PC-9 (cell line): ENCODE measurements at regions of chr19 and their contacts with region 1.

Region 1: DNA sequence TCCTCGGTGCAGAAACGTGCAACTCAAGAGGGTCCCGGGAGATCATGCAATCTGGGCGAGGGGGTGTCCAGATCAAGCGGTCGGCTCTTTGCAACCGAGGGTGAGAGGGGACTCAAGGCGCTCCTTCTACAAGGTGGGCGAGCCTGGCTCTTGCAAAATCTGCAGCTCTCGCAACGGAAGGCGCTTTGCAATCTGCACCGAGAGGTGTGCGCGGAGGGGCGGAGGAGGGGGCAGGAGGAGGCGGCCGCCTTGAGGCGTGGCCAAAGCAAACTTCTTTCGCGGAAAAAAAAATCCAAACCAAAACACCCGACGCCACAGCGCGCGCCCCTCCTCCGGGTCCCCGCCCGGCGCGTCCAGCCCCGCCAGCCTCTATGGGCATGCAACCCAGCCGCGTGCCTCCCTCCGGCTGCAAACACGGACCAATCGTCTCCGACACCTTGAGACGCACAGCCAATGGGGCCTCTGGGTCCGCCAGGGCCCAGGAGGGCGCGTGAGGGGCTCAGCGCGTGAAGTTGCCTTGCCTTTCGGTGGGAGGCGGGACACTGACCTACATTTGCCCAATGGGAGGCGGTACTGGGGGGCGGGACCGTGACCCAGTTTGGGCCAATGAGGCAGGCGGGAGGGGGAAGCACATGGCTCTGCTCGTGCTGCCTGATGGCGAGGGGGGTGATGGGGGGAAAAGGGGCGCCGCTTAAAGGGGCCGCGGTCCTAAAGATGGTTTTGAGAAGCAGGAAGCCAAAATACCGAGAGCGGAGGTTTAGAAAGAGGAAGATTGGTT is at the start of gene DBP:
- DNase-seq: peak; percentile 100
- H3K4me3 ChIP-seq: peak within 1 kb of the TSS; percentile 74
- H3K27ac ChIP-seq: peak within 1 kb of the TSS; percentile 84
- H3K4me1 ChIP-seq: peaks cover 31% of the 10 kb centered on the region
- H3K27me3 ChIP-seq: no peaks in the 10 kb centered on the region
- CTCF ChIP-seq: no peak
- total RNA-seq, gene DBP: 48.2 and 48.6 TPM in 2 replicates

Region 2: GRCh38 chr19:48501496-48502350 is 135.6 kb before region 1 on chr19:
- CTCF ChIA-PET with region 1: no interaction called
- POLR2A ChIA-PET with region 1: no interaction called
- intact Hi-C with region 1: loop called (anchors 5 kb)
- DNase-seq: peak; percentile 96 to 99
- H3K4me3 ChIP-seq: peak overlapping the region; percentile 95
- H3K27ac ChIP-seq: peak overlapping the region; percentile 65
- H3K4me1 ChIP-seq: peaks cover 16% of the 10 kb centered on the region; the same call in 1 of the 2 replicates
- H3K27me3 ChIP-seq: no peaks in the 10 kb centered on the region
- CTCF ChIP-seq: no peak

Region 3: DNA sequence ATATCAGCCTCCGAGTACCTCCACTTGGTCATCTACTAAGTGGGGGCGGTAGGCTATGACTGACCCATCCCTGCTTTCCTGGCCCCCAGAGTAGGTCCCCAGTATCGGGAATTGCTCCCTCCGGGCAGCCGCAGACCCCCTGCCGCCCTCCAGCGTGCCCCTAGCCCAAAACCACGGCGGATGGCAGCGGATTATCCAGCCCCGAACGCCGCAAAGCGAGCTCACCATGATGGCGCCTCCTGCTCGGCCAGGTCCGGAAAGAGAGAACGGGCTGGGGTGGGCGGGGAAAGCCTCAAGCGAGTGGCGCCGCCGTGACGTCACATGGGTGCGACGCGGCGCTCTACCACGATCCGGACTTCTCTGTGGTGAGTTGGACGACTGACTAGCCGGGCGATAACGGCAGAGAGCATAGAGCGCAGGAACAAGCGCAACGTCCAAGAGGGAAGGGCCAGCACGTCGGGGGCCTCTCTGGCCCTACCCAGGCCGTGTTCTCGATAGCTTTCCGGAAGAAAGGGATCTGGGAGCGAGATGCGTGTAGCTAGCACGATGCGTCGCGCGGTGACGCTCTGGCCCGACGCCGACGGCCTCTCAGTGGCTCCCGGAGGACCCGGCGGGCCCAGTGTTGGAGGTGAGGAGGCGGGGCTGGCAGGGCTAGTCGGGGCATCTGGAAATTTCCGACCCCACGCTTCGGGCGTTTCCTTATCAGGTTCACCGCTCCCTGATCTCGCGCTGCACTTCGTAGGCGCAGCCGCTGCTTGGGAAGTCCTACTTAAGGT is 18.3 kb before region 1 on chr19 and contains the starts of genes RPL18 and SPHK2:
- CTCF ChIA-PET with region 1: no interaction called
- POLR2A ChIA-PET with region 1: no interaction called
- intact Hi-C with region 1: loop called (anchors 1 kb)
- DNase-seq: peak; percentile 97 to 99
- H3K4me3 ChIP-seq: peak within 1 kb of the TSS; percentile 92
- H3K27ac ChIP-seq: peak within 1 kb of the TSS; percentile 91
- H3K4me1 ChIP-seq: peaks cover 42% of the 10 kb centered on the region
- H3K27me3 ChIP-seq: no peaks in the 10 kb centered on the region
- CTCF ChIP-seq: no peak
- total RNA-seq, gene RPL18: 1,618 and 1,710 TPM in 2 replicates
- total RNA-seq, gene SPHK2: 18.4 and 20.0 TPM in 2 replicates

Region 4: DNA sequence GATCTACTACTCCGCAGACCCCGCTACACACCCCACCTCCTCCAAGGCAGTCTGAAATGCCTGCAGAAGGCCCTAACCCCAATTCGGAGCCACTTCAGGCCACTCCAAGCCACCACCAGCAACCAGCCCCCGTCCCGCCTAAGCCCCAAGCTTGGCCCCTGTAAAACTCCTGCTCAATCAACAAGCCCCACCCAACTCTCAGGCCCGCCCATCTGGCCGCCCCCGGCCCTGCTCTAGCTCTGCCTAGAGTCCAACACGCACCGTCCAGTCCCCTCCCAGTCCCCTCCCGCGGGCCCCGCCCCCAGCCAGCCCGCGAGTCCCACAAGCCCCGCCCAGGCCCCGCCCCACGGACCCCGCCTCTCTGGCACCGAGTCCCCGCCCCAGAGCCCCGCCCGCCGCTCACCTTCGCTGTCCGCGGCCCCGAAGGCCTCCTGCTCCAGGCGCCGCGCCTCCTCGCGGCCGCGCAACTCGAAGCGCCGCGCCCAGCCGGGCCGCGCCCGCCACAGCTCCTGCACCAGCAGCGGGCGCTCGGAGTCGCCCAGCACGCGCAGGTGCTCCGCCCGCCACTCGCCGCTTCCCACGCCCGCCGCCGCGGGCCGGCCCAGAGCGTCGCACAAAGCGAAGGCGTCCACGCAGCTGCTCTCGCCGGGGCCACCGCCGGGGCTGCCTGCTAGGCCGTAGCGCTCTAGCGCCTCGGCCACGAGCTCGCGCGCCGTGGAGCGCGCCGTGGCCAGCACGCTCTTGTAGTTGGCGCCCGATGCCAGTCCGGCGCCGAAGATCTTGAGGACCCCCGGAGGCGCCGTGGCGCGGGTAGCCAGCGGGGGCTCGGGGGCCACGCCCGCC is 101.4 kb after region 1 on chr19:
- CTCF ChIA-PET with region 1: no interaction called
- POLR2A ChIA-PET with region 1: no interaction called
- intact Hi-C with region 1: loop called (anchors 5 kb)
- DNase-seq: peak; percentile 74 to 96
- H3K4me3 ChIP-seq: peak overlapping the region; percentile 58; the same call in 1 of the 2 replicates
- H3K27ac ChIP-seq: no peak overlapping the region
- H3K4me1 ChIP-seq: no peaks in the 10 kb centered on the region; the same call in 1 of the 2 replicates
- H3K27me3 ChIP-seq: no peaks in the 10 kb centered on the region
- CTCF ChIP-seq: no peak

Region 5: DNA sequence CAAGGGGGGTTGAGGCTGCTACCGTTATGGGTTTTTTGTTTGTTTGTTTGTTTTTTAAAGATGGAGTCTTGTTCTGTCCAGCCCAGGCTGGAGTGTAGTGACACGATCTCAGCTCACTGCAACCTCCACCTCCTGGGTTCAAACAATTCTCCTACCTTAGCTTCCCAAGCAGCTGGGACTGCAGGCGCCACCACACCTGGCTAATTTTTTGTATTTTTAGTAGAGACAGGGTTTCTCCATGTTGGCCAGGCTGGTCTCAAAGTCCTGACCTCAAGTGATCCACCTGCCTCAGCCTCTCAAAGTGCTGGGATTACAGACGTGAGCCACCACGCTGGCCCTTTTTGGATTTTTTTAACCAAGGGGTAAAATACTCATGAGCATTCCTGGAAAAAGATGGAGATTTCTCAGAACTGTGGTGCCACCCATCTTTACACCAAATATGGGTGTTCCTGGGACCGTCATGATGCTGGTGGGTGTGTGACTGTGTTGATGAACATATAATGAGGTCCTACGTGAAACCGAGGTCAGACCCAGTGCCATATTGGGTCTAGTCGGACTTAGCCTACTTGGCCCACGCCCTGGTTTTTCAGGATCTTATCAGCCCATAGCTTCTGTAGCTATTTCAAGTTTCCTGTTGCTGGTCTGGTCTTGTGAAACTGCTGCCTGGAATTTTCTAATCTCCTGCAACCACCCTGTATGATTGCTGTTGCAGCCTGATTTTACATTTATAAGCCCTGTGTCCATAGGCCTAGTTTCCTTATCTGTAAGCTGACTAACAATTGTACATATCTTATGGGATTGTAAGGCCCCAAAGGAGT is 241.1 kb after region 1 on chr19:
- CTCF ChIA-PET with region 1: no interaction called
- POLR2A ChIA-PET with region 1: no interaction called
- intact Hi-C with region 1: no loop called
- DNase-seq: peak in 1 of 2 experiments; percentile 48
- H3K4me3 ChIP-seq: no peak overlapping the region
- H3K27ac ChIP-seq: no peak overlapping the region
- H3K4me1 ChIP-seq: peaks cover 21% of the 10 kb centered on the region
- H3K27me3 ChIP-seq: no peaks in the 10 kb centered on the region
- CTCF ChIP-seq: no peak

Region 6: DNA sequence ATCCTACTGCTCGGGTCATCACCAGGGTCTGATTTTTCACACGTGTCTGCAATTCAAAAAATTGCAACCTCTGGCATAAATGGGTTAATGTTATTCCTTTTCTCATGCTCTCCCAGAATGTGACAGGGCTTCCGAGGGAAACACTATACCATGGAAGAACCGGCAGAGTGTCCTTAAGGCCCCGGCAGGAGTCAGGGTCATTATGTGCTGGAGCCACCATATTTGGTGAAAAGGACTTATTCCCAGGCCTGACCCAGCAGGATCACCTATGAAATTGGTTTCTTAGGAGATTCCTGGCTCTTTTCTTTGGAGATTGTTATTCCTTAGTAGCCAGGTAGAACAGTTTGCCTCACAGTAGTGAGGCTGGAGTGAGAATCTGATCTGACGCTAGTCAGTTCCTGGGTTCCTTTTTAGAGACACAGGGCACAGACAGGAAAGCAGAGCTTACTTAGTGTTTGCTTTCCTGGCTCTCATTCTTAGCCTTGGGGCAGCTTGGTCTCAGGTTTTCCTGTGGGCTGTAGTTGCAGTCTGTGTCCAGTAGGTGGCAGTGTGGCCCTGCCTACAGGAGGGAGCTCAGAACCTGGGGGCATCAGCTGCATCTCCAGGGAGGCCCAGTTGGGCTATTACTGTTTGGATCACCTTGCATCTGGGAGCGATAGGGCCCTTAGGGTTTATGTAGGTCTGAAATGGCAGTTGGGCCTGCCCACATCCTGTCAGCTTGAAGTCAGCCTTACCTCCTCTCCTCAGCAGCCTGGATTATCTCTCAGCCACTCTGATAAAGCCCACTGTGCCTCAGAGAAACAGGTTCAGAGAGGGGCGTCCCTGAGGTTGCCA is 460.3 kb after region 1 on chr19:
- CTCF ChIA-PET with region 1: interaction called, 12 read pairs
- POLR2A ChIA-PET with region 1: no interaction called
- intact Hi-C with region 1: no loop called
- DNase-seq: peak; percentile 74 to 75
- H3K4me3 ChIP-seq: no peak overlapping the region
- H3K27ac ChIP-seq: 0 out of 2 replicates have a peak overlapping the region, but pooled peaks have one; percentile 31
- H3K4me1 ChIP-seq: no peaks in the 10 kb centered on the region; the same call in 1 of the 2 replicates
- H3K27me3 ChIP-seq: no peaks in the 10 kb centered on the region
- CTCF ChIP-seq: peak; percentile 100